ENCODE measurements at regions of chr4 and their contacts with region 1.

Region 1: DNA sequence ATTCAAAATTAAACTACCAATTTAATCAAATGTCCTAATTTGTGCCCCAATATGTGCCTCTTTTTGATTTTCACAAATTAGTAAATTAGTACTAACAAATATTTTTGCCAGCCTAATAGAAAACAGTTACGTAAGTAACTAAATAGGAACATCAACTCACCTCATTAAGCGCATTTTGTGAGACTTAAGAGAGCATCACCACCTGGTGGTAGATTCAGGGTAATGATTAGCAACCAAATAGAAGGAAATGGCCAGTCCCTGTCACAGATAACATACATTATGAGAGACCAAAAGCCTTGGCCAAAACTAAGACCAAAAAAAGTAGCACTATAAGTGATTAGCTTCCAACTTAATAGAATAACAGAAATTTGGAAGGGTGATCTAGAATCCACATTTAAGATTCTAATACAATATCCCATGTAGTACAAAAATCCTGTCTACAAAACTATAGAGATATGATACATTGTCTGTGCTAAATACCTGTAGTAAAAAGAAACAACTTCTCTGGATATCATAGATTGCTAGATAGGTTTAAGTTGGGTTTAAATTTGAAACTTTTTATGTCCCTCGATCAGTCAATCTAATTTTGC is 46.7 kb downstream of the C4orf46 start:
- DNase-seq: peak; percentile 18
- H3K4me3 ChIP-seq: no peak overlapping the region
- H3K27ac ChIP-seq: no peak overlapping the region
- H3K4me1 ChIP-seq: no peaks in the 10 kb centered on the region
- H3K27me3 ChIP-seq: no peaks in the 10 kb centered on the region
- CTCF ChIP-seq: peak; percentile 53

Region 2: DNA sequence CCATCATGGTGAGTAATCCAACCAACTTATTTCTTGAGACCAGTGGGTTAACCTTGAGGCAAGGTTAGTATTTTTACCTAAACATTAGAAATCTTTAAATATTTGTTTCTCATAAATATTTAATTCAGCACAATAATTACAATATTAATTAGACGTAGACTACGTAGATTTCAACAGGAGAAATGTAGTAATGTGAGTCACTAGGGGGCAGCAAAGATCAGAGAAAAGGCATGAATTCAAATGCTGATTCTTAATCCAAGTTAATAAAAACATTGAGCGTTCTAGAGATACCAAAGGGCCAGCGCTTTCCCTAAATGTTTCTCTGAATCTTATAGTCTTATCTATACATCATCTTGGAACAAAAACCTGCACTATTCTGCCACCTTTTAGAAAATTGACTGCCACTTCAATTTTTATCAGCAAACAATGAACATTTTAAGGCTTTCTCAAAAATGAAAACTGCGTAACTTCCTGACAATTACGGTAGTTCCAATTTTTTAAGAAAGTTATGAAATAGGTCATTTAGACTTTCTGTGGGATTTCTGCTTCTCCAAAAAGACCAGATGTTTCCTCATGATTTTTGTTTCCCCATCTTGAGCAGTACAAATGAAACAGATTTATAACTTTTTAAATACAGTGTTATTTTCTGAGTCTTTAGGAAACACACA is 632.8 kb before region 1 on chr4:
- intact Hi-C with region 1: loop called (anchors 10 kb)
- DNase-seq: peak; percentile 77
- H3K4me3 ChIP-seq: no peak overlapping the region
- H3K27ac ChIP-seq: peak overlapping the region; percentile 1
- H3K4me1 ChIP-seq: peaks cover 4% of the 10 kb centered on the region
- H3K27me3 ChIP-seq: no peaks in the 10 kb centered on the region
- CTCF ChIP-seq: peak; percentile 61

Region 3: GRCh38 chr4:158255727-158256324 is 369.2 kb before region 1 on chr4:
- intact Hi-C with region 1: loop called (anchors 5 kb)
- DNase-seq: no peak
- H3K4me3 ChIP-seq: no peak overlapping the region
- H3K27ac ChIP-seq: no peak overlapping the region
- H3K4me1 ChIP-seq: no peaks in the 10 kb centered on the region
- H3K27me3 ChIP-seq: no peaks in the 10 kb centered on the region
- CTCF ChIP-seq: peak; percentile 70

Region 4: DNA sequence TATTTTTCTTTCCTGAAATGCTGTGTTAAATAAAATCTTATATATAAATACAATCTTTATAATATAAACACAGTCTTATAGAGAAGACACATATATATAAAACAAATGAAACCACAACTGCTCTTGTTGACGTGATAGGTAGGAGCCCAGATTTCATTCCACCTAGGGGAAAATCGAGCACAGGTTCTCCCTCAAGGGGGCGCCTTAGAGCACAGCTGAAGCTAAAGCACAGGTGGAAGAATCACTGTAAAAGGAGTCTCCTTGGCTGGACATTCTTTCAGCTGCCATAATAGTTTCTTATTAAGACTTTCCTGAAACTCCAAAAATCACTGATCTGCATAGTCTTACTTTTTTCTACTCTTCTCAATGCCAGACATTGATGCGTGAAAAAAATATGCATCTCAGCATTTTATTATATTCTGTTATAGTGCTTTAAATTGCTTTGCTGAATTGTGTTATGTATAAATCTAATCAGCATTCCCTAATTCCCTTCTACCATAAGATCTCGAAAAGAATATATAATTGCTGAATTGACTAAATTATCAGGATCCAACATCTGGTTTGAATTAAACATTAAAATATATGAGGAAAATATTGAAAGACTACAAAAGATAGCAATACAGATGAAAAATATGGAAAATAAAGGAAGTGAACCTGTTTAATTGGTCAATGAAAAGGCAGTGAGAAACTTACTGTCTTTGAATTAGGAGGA is 128.8 kb before region 1 on chr4:
- intact Hi-C with region 1: loop called (anchors 5 kb)
- DNase-seq: peak; percentile 60
- H3K4me3 ChIP-seq: no peak overlapping the region
- H3K27ac ChIP-seq: no peak overlapping the region
- H3K4me1 ChIP-seq: no peaks in the 10 kb centered on the region
- H3K27me3 ChIP-seq: no peaks in the 10 kb centered on the region
- CTCF ChIP-seq: peak; percentile 54